GM13977 (cell line): ENCODE measurements at regions of chr4 and their contacts with region 1.

Region 1: GRCh38 chr4:10554694-10555093 is 97.5 kb upstream of the ZNF518B start:
- DNase-seq: peak; percentile 36
- CTCF ChIP-seq: peak; percentile 74

Region 2: GRCh38 chr4:10164877-10165283 is 389.8 kb before region 1 on chr4:
- in situ Hi-C with region 1: loop called (anchors 10 kb)
- DNase-seq: peak; percentile 32
- CTCF ChIP-seq: peak; percentile 60

Region 3: DNA sequence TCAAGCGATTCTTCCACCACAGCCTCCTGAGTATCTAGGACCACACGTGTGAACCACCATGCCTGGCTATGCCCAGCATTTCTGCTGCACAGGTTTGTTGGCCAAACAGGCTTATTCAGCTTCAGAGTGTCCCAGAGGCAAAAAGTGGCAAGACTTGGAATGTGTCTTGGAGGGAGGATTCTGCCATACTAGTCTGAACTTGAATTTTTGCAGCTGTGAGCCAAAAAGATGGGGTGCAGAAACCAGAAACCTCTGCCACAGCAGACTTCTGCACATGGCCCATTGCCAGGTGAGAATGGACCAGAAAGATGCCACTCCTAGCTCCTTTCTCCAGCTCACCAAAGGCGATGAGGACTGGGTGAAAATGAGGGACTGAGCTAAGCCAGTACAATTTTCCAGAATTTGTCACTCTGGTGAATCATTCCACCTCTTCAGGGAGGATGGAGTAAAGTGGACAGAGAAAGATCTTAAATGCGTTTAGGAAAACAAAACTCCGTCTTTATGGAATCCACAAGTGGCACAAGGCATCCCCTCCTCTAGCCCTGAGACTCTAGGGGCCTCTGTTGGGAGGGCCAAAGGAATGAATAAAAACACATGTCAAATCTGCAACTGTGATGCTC is 499.0 kb after region 1 on chr4:
- in situ Hi-C with region 1: no loop called
- DNase-seq: no peak
- CTCF ChIP-seq: no peak

Region 4: DNA sequence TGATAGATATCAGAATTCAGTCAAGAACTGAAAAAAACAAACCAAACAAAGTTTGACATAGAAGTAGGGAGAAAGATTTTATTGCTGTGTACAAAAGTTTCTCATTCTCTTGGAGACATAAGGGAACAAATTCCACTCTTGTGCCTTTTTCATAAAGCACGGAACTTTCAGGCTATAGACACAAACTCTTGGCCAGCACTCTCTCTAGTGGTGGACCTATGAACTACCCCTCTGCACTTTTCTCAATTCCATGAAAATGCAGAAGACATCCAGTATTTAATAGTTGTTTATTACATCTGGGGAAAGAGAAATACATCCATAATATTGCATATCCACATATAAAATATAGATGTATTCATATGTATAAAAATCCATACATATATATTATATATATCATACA is 1165.6 kb after region 1 on chr4:
- in situ Hi-C with region 1: loop called (anchors 25 kb)
- DNase-seq: peak; percentile 30
- CTCF ChIP-seq: peak; percentile 58